PC-3 (cell line): ENCODE measurements at regions of chr12 and their contacts with region 1.

Region 1: GRCh38 chr12:52506858-52507715 is 13.1 kb downstream of the KRT5 start:
- DNase-seq: peak; percentile 72
- ATAC-seq: peak; percentile 81
- H3K4me3 ChIP-seq: no peak overlapping the region
- H3K27ac ChIP-seq: no peak overlapping the region
- H3K4me1 ChIP-seq: no peaks in the 10 kb centered on the region
- H3K27me3 ChIP-seq: no peaks in the 10 kb centered on the region
- CTCF ChIP-seq: peak; percentile 77

Region 2: DNA sequence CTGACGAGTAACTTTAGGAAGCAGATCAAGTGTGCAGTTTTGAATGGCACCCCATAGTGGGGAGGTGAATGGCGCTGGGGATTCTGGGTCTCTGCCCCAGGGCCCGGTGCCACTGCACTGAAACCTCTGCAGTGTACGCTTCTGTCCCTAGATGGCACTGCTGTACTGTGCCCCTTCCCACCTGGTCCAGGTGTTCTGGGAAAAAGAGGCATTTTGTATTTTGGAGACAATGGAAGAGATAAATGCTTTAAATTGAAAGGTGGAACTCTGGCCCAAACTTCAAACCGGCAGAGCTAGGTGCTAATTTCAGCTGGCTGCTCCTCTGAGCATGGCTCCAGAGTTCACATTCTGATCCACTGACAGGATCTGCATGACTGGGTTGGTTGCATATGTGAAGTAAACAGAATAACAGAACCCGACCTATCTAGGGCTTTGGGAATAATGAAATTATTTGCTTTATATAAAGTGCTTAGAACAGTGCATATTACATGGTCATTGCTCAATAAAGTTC is 367.5 kb before region 1 on chr12:
- CTCF ChIA-PET with region 1: no interaction called
- POLR2A ChIA-PET with region 1: no interaction called
- intact Hi-C with region 1: loop called (anchors 5 kb)
- DNase-seq: peak; percentile 90
- ATAC-seq: peak; percentile 68
- H3K4me3 ChIP-seq: no peak overlapping the region
- H3K27ac ChIP-seq: no peak overlapping the region
- H3K4me1 ChIP-seq: peaks cover 16% of the 10 kb centered on the region
- H3K27me3 ChIP-seq: no peaks in the 10 kb centered on the region
- CTCF ChIP-seq: peak; percentile 96

Region 3: DNA sequence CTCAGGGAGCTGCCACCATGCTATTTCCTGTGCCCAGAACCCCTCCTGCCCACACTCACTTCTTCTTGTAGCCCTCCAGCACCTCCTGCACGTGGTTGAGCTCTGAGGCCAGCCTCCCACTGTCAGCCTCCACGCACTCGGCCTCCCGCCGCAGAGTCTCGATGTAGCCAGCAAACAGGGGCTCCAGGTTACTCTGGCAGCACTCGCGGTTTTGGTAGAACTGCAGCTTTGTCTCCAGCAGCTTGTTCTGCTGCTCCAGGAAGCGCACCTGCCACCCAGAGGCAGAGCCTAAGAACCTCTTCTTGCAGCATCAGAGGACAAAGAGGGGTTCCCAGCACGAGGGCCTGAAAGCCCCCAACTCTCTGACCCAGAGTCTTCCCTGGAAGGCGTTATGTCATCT is 188.0 kb before region 1 on chr12:
- CTCF ChIA-PET with region 1: no interaction called
- POLR2A ChIA-PET with region 1: no interaction called
- intact Hi-C with region 1: no loop called
- DNase-seq: peak; percentile 42
- ATAC-seq: peak; percentile 54
- H3K4me3 ChIP-seq: no peak overlapping the region
- H3K27ac ChIP-seq: no peak overlapping the region
- H3K4me1 ChIP-seq: no peaks in the 10 kb centered on the region
- H3K27me3 ChIP-seq: no peaks in the 10 kb centered on the region
- CTCF ChIP-seq: peak; percentile 44; the same call in 1 of the 2 replicates

Region 4: GRCh38 chr12:52372216-52373154 is 134.6 kb before region 1 on chr12:
- CTCF ChIA-PET with region 1: no interaction called
- POLR2A ChIA-PET with region 1: no interaction called
- intact Hi-C with region 1: loop called (anchors 1 kb)
- DNase-seq: peak; percentile 88
- ATAC-seq: peak; percentile 93
- H3K4me3 ChIP-seq: no peak overlapping the region
- H3K27ac ChIP-seq: no peak overlapping the region
- H3K4me1 ChIP-seq: no peaks in the 10 kb centered on the region
- H3K27me3 ChIP-seq: no peaks in the 10 kb centered on the region
- CTCF ChIP-seq: peak; percentile 87

Region 5: GRCh38 chr12:52390739-52391617 is 116.1 kb before region 1 on chr12:
- CTCF ChIA-PET with region 1: interaction called, 7 read pairs
- POLR2A ChIA-PET with region 1: no interaction called
- intact Hi-C with region 1: loop called (anchors 1 kb)
- DNase-seq: peak; percentile 62
- ATAC-seq: peak; percentile 70
- H3K4me3 ChIP-seq: no peak overlapping the region
- H3K27ac ChIP-seq: no peak overlapping the region
- H3K4me1 ChIP-seq: 0 out of 2 replicates have a peak, but pooled peaks cover 1% of the 10 kb centered on the region
- H3K27me3 ChIP-seq: no peaks in the 10 kb centered on the region
- CTCF ChIP-seq: peak; percentile 92

Region 6: DNA sequence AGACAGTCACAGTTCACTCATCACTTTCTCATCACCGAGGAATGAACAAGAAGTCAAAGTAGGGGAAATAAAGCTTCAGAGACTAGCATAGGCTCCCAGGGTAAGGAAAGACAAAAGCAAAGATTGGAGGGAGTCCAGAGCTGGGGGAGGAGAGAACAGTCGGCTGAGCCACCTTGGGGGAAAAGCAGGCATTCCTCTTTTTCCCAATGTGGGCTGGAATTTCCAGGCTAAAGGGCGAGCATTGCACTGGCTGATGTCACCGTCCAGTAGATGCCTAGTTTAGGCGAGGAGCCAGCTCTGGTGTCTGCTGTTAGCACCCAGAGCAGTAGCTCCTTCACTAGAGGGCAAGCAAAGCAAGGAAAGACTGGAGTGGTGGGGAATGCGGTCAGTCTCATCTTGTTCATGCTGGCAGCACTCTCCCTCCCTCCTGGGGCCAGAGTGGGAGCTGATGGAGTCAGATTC is 64.5 kb before region 1 on chr12:
- CTCF ChIA-PET with region 1: no interaction called
- POLR2A ChIA-PET with region 1: no interaction called
- intact Hi-C with region 1: loop called (anchors 10 kb)
- DNase-seq: peak; percentile 99
- ATAC-seq: peak; percentile 64
- H3K4me3 ChIP-seq: peak overlapping the region; percentile 11; the same call in 1 of the 2 replicates
- H3K27ac ChIP-seq: peak overlapping the region; percentile 95
- H3K4me1 ChIP-seq: peaks cover 72% of the 10 kb centered on the region
- H3K27me3 ChIP-seq: no peaks in the 10 kb centered on the region
- CTCF ChIP-seq: peak; percentile 56